ENCODE measurements at regions of chr6 and their contacts with region 1.

Region 1: GRCh38 chr6:548517-548916 is 108.4 kb downstream of the HUS1B start:
- DNase-seq: peak; percentile 84
- H3K4me3 Mint-ChIP-seq: peak overlapping the region; percentile 67
- H3K27ac Mint-ChIP-seq: peak overlapping the region; percentile 87
- H3K4me1 Mint-ChIP-seq: peaks cover 53% of the 10 kb centered on the region
- H3K27me3 Mint-ChIP-seq: no peaks in the 10 kb centered on the region

Region 2: DNA sequence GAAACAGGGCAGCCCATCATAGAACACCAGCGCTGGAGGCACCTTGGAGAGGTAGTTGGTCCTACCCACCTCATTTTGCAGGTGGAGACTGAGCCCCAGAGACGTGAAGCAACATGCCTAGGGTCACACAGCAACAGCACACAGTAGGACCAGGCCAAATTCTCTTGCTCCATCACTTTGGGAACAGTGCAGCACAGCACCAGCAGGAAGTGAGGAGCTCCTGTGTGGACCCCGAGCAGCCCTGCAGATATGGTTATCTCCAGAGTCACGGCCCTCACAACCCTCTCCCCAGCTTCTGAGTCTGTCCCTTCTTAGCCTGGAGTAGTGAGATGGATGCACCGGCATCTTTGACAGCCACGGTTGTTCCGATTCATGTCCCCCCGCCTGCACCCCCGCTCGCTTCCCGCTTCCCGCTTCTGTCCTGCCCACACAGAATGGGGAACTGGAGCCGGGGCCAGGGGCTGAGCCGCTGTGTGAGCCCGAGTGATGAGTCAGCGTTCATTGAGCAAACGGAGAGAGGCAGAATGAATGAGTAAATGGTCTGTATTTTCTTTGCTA is 328.8 kb before region 1 on chr6:
- intact Hi-C with region 1: loop called (anchors 5 kb)
- DNase-seq: no peak
- H3K4me3 Mint-ChIP-seq: no peak overlapping the region
- H3K27ac Mint-ChIP-seq: no peak overlapping the region
- H3K4me1 Mint-ChIP-seq: peaks cover 68% of the 10 kb centered on the region
- H3K27me3 Mint-ChIP-seq: no peaks in the 10 kb centered on the region

Region 3: GRCh38 chr6:364609-365540 is 183.6 kb before region 1 on chr6:
- intact Hi-C with region 1: no loop called
- DNase-seq: no peak
- H3K4me3 Mint-ChIP-seq: no peak overlapping the region
- H3K27ac Mint-ChIP-seq: no peak overlapping the region
- H3K4me1 Mint-ChIP-seq: no peaks in the 10 kb centered on the region
- H3K27me3 Mint-ChIP-seq: peaks cover 8% of the 10 kb centered on the region

Region 4: GRCh38 chr6:431986-432385 is 116.5 kb before region 1 on chr6:
- intact Hi-C with region 1: loop called (anchors 1 kb)
- DNase-seq: peak; percentile 90
- H3K4me3 Mint-ChIP-seq: peak overlapping the region; percentile 14
- H3K27ac Mint-ChIP-seq: peak overlapping the region; percentile 67
- H3K4me1 Mint-ChIP-seq: peaks cover 72% of the 10 kb centered on the region
- H3K27me3 Mint-ChIP-seq: no peaks in the 10 kb centered on the region

Region 5: GRCh38 chr6:506508-506907 is 42.0 kb before region 1 on chr6:
- intact Hi-C with region 1: loop called (anchors 1 kb)
- DNase-seq: peak; percentile 77
- H3K4me3 Mint-ChIP-seq: peak overlapping the region; percentile 75
- H3K27ac Mint-ChIP-seq: peak overlapping the region; percentile 98
- H3K4me1 Mint-ChIP-seq: peaks cover 90% of the 10 kb centered on the region
- H3K27me3 Mint-ChIP-seq: no peaks in the 10 kb centered on the region

Region 6: DNA sequence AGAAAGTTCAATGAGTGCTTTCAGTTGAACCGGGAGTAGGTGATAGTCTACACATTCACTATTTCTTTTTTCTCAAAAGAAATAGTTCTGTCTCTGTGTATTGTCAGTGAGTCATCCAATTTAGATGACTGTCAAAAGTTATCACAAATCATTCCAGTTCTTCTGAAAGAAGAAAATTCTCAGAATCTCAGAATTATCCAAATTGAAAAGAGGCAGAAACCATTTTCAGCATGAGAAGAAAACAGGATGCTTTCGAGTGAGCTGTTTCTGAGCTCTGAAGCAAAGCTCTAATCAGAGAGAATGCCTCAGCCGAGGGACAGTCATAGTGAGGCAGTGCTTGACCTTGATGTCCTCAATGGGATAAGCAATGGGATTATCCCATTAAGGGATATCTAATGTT is 10.4 kb after region 1 on chr6:
- intact Hi-C with region 1: loop called (anchors 1 kb)
- DNase-seq: peak; percentile 64
- H3K4me3 Mint-ChIP-seq: peak overlapping the region; percentile 33
- H3K27ac Mint-ChIP-seq: peak overlapping the region; percentile 90
- H3K4me1 Mint-ChIP-seq: peaks cover 35% of the 10 kb centered on the region
- H3K27me3 Mint-ChIP-seq: no peaks in the 10 kb centered on the region